Activated CD8-positive, alpha-beta T cell treated with anti-CD3 and anti-CD28 coated beads for 36 hours (primary cell): ENCODE measurements at regions of chr2 and their contacts with region 1.

Region 1: GRCh38 chr2:45169339-45170190 is 160.3 kb upstream of the SIX2 start:
- DNase-seq: peak; percentile 9
- ATAC-seq: peak; percentile 24
- H3K4me3 Mint-ChIP-seq: peak overlapping the region; percentile 15
- H3K27ac Mint-ChIP-seq: no peak overlapping the region
- H3K4me1 Mint-ChIP-seq: peaks cover 2% of the 10 kb centered on the region
- H3K27me3 Mint-ChIP-seq: peaks cover 63% of the 10 kb centered on the region
- CTCF ChIP-seq: no peak

Region 2: GRCh38 chr2:45014016-45014702 is 155.4 kb before region 1 on chr2:
- CTCF ChIA-PET with region 1: no interaction called
- POLR2A ChIA-PET with region 1: no interaction called
- intact Hi-C with region 1: loop called (anchors 10 kb)
- DNase-seq: peak; percentile 52
- ATAC-seq: peak; percentile 80
- H3K4me3 Mint-ChIP-seq: no peak overlapping the region
- H3K27ac Mint-ChIP-seq: no peak overlapping the region
- H3K4me1 Mint-ChIP-seq: peaks cover 10% of the 10 kb centered on the region
- H3K27me3 Mint-ChIP-seq: peaks cover 70% of the 10 kb centered on the region
- CTCF ChIP-seq: peak; percentile 74

Region 3: DNA sequence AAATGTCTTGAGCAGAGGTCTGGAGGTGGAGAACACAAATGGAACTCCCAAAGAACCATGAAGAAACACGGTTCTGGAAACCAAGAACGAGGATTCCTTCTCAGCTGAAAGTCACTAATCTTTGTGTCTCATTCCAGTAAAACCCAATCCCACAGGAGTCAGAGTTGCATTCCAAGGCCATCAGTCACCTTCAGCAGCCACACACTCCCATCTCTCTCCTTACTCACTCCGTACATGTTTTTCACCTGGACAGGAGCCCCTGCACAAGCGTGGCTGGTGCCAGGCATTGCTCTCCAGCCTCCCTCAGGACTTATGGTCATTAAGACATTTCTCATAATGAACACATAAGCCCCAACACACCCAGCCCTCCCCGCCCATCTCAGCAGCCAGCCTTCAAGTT is 15.0 kb after region 1 on chr2:
- CTCF ChIA-PET with region 1: no interaction called
- POLR2A ChIA-PET with region 1: no interaction called
- intact Hi-C with region 1: no loop called
- DNase-seq: no peak
- ATAC-seq: no peak
- H3K4me3 Mint-ChIP-seq: no peak overlapping the region
- H3K27ac Mint-ChIP-seq: no peak overlapping the region
- H3K4me1 Mint-ChIP-seq: no peaks in the 10 kb centered on the region
- H3K27me3 Mint-ChIP-seq: peaks cover 27% of the 10 kb centered on the region
- CTCF ChIP-seq: no peak

Region 4: DNA sequence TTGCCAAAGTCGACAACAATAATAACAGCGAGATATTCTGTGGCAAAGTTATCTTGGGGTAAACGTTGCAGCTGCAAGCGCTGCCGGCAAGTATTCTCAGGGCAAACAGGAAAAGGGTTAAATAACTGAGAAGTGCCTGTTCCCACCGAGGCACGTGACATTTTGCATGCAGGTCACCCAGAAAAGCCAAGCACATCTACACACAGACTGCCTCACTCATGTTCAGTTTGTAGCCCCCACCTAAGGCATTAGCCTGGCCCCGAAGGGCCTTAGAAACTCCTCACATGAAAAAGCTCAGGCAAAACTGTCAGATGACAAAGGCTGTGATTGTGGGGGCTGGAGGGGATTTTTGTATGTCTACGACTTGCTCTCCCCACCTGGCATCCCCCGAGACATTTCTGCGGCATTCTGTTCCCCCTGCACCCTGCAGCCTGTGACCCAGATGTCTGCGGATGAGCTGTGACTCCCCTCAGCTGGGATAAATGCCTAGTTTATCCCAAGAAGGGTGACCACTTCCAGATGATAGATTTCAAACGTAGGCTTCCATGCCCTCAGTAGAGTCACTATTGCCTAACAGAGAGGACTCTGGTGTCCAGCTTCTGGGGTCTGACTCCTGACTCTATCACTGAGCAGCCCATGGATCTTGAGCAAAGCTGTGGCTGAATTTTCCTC is 54.9 kb after region 1 on chr2:
- CTCF ChIA-PET with region 1: no interaction called
- POLR2A ChIA-PET with region 1: no interaction called
- intact Hi-C with region 1: no loop called
- DNase-seq: peak; percentile 1
- ATAC-seq: no peak
- H3K4me3 Mint-ChIP-seq: no peak overlapping the region
- H3K27ac Mint-ChIP-seq: no peak overlapping the region
- H3K4me1 Mint-ChIP-seq: no peaks in the 10 kb centered on the region
- H3K27me3 Mint-ChIP-seq: peaks cover 10% of the 10 kb centered on the region
- CTCF ChIP-seq: no peak